ENCODE measurements at regions of chr12 and their contacts with region 1.

Region 1: DNA sequence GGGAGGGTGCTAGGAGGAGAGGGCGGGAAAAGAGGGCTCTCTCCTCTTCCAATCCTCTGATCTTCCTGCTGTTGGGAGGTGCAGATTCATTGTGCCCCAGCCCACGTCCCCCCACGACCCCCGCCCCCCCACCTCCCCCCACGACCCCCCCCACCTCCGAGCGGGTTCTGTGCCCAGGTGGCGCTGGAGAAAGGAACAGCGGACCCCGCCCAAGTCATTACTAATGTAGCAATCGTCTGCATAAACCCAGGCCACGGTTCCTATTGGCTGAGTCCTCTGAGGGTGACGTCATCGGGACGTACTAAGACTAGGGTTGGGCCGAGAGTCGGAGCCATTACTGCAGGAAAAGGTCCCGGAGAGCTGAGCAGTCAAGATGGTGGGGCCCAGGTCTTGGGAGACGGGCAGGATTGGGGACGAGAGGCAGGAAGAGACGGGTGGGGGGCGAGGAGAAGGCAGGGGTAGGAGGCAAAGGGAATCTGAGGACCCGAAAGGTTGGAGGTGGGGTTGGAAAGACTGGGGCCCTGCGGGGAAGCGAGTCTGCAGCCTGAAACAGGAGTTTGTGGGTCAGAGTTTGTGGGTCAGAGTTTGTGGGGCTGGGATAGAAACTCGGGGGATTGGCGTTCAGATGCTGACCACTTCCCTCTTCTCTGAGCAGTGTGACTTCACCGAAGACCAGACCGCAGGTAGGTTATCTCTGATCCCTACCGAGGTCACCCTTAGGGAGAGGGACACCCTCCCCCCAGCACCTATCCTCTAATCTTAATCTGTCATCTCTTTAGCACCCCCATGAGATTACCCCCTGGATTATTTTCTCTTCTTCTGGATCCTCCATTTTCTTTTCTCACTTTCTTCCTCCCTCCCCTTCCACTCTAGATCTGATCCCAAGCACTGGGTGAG is at the start of gene MYL6:
- ATAC-seq: peak; percentile 72 to 88 (median 84)
- H3K4me3 ChIP-seq: peak within 1 kb of the TSS; percentile 63 to 89 (median 83)
- H3K27ac ChIP-seq: peak within 1 kb of the TSS; percentile 84 to 86
- H3K4me1 ChIP-seq: peaks cover 24% of the 10 kb centered on the region in 2 donors
- total RNA-seq, gene MYL6: 1,063 to 2,469 (median 1,244) TPM

Region 2: GRCh38 chr12:56266693-56267442 is 108.6 kb after region 1 on chr12 and contains the start of gene COQ10A:
- in situ Hi-C with region 1: loop called in 1 of 9 experiments (anchors 25 kb)
- ATAC-seq: peak; percentile 91 to 95 (median 93)
- H3K4me3 ChIP-seq: peak within 1 kb of the TSS; percentile 52 to 65 (median 60)
- H3K27ac ChIP-seq: peak within 1 kb of the TSS; percentile 79 to 82
- H3K4me1 ChIP-seq: peaks cover 0 to 5% of the 10 kb centered on the region in 2 donors
- total RNA-seq, gene COQ10A: 6.8 to 17.4 (median 14.3) TPM

Measured in motor neuron (in vitro differentiated cells).